HepG2 (cell line): ENCODE measurements at regions of chr5 and their contacts with region 1.

Region 1: GRCh38 chr5:39074016-39074886 is at the start of gene RICTOR:
- DNase-seq: peak; percentile 70
- ATAC-seq: peak; percentile 89
- H3K4me3 ChIP-seq: peak within 1 kb of the TSS; percentile 85 to 100 (median 99)
- H3K27ac ChIP-seq: peak within 1 kb of the TSS; percentile 98
- H3K4me1 ChIP-seq: peaks cover 28% of the 10 kb centered on the region
- H3K27me3 ChIP-seq: no peaks in the 10 kb centered on the region; a peak in 1 of 5 replicates
- CTCF ChIP-seq: peak; percentile 8; the same call in 1 of the 2 replicates
- EP300 ChIP-seq: no peak
- POLR2A ChIP-seq: peak; percentile 58 to 84
- RAD21 ChIP-seq: no peak
- total RNA-seq, gene RICTOR: 10.7 and 32.6 TPM in 2 replicates

Region 2: GRCh38 chr5:39057734-39058133 is 16.5 kb before region 1 on chr5:
- CTCF ChIA-PET with region 1: no interaction called
- POLR2A ChIA-PET with region 1: no interaction called
- in situ Hi-C with region 1: no loop called
- intact Hi-C with region 1: loop called (anchors 2 kb)
- DNase-seq: no peak
- ATAC-seq: no peak
- H3K4me3 ChIP-seq: peak overlapping the region in 1 of 3 experiments; percentile 20; a peak in 1 of 6 replicates
- H3K27ac ChIP-seq: no peak overlapping the region
- H3K4me1 ChIP-seq: peaks cover 28% of the 10 kb centered on the region
- H3K27me3 ChIP-seq: no peaks in the 10 kb centered on the region
- CTCF ChIP-seq: no peak
- EP300 ChIP-seq: no peak
- POLR2A ChIP-seq: no peak
- RAD21 ChIP-seq: no peak

Region 3: GRCh38 chr5:39106322-39106721 is 32.1 kb after region 1 on chr5:
- CTCF ChIA-PET with region 1: interaction called, 3 read pairs
- POLR2A ChIA-PET with region 1: no interaction called
- in situ Hi-C with region 1: no loop called
- intact Hi-C with region 1: loop called (anchors 1 kb)
- DNase-seq: no peak
- ATAC-seq: no peak
- H3K4me3 ChIP-seq: no peak overlapping the region
- H3K27ac ChIP-seq: no peak overlapping the region
- H3K4me1 ChIP-seq: peaks cover 32% of the 10 kb centered on the region
- H3K27me3 ChIP-seq: no peaks in the 10 kb centered on the region
- CTCF ChIP-seq: no peak
- EP300 ChIP-seq: no peak
- POLR2A ChIP-seq: no peak
- RAD21 ChIP-seq: no peak

Region 4: GRCh38 chr5:40781843-40782409 is 1707.7 kb after region 1 on chr5:
- CTCF ChIA-PET with region 1: no interaction called
- POLR2A ChIA-PET with region 1: no interaction called
- in situ Hi-C with region 1: no loop called
- intact Hi-C with region 1: loop called (anchors 10 kb)
- DNase-seq: no peak
- ATAC-seq: no peak
- H3K4me3 ChIP-seq: no peak overlapping the region
- H3K27ac ChIP-seq: peak overlapping the region; percentile 24
- H3K4me1 ChIP-seq: peaks cover 73% of the 10 kb centered on the region
- H3K27me3 ChIP-seq: no peaks in the 10 kb centered on the region
- CTCF ChIP-seq: no peak
- EP300 ChIP-seq: no peak
- POLR2A ChIP-seq: no peak
- RAD21 ChIP-seq: no peak